Right cardiac atrium (tissue), 5 donors: ENCODE measurements at regions of chr7 and their contacts with region 1.

Region 1: DNA sequence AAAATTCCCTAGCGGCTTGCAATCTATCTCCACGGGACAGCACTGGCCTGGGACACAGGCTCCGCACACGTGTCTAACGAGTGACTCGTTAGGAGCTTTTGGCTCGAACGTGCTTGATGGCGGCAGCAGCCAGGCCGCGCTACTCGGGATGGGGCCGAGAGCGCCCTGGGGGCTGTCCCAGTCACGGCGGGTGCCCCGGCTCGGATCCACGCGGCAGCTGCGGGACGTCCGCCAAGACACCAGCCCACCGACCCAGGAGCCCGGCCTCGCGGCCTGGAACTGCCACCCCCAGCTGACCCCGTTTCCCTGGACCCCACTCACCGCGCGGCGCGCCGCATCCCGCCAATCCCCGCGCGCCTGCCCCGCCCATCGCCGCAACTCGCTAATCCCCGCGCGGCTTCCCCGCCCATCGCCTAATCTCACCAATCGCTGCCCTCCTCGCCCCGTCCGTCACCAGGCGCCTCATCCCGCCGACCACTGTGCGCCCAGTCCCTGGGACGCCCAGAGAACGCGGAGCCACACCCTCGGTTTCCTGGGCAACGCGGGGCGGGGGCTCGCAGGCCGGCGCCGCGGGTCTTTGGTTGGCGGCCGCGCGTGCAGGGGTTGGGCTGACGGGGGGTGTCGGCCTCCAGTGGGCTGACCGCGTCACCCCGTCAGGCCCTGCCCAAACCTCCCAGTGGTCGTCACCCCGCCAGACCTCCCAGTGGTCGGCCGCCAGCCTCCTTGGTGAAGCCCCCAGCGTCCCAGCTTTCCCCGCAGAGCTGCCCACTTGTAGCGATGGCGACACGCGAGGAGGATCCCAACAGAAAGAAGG is at the start of gene POLD2:
- DNase-seq: peak; percentile 99 to 100 (median 99)
- ATAC-seq: peak; percentile 99
- H3K4me3 ChIP-seq: peak within 1 kb of the TSS; percentile 45
- H3K27ac ChIP-seq: peak within 1 kb of the TSS; percentile 85
- H3K4me1 ChIP-seq: peaks cover 7% of the 10 kb centered on the region
- H3K27me3 ChIP-seq: no peaks in the 10 kb centered on the region
- total RNA-seq, gene POLD2: 85.8 to 110 (median 99.0) TPM

Region 2: GRCh38 chr7:44082541-44083207 is 40.7 kb before region 1 on chr7:
- intact Hi-C with region 1: loop called in 3 of 4 experiments (anchors 5 kb)
- DNase-seq: peak; percentile 99 to 100 (median 100)
- ATAC-seq: peak; percentile 96 to 97
- H3K4me3 ChIP-seq: peak overlapping the region; percentile 83
- H3K27ac ChIP-seq: peak overlapping the region; percentile 84
- H3K4me1 ChIP-seq: peaks cover 3% of the 10 kb centered on the region
- H3K27me3 ChIP-seq: no peaks in the 10 kb centered on the region

Region 3: DNA sequence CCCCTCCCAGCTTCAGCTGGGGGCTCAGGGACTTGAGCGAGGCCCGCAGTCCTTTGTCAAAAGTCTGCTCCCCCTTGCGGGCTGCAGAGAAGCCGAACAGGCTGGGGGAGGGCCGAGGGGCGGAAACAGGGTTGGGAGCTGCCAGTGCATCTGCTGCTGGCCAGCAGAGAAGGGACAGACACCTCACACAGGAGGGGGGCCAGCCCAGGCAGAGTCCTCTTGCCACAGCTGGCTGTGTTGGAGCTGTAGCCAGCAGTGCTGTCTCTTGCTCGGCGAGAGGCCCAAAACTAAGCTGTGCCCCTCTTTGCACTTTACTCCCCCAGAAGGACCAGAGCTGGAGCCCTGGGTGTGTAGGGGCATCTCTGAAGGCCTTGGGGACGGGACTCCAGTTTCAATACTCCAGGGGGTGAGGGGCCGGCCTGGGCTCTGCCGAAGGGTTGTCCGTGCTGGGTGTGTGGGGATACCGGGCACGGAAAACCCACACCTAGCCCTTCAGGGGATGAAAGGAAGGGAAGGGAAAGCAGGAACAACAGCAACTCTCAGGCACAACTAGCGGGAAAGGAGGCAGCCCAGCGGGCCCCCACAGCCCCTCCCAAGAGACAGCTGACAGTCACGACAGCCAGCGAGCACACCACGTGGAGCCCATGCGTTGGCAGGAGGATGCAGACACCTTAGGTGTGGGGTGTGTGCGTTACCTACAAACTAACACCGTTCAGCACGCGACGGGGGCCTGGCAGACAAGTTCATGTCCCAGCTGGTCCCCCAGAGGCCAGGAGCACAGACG is 95.2 kb after region 1 on chr7:
- intact Hi-C with region 1: no loop called
- DNase-seq: peak in 2 of 3 donors; percentile 13 to 42
- ATAC-seq: peak; percentile 15 to 19
- H3K4me3 ChIP-seq: no peak overlapping the region
- H3K27ac ChIP-seq: no peak overlapping the region
- H3K4me1 ChIP-seq: no peaks in the 10 kb centered on the region
- H3K27me3 ChIP-seq: no peaks in the 10 kb centered on the region